ENCODE measurements at regions of chr3 and their contacts with region 1.

Region 1: DNA sequence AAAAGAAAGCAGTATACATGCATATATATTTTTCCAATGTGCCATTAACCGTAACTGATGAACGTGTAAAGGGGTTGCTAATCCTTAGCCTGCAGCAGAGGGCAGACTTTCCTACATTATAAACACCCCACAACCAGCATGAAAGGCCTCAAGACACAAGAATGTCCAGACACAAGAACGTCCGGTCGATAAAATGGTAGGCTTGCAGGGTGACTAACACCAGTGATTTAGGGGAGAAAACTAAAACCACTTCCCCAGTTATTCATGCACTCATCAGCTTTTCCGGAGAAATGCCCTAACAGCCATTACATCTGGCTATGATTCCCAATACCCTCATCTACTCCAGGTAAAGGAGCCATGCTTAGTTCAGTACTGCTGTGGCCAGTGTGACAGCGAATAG is 57.4 kb downstream of the LRTM1 start:
- DNase-seq: no peak
- ATAC-seq: peak in 3 of 4 donors; percentile 80 to 91 (median 83)
- H3K4me3 ChIP-seq: no peak overlapping the region
- H3K27ac ChIP-seq: no peak overlapping the region
- H3K4me1 ChIP-seq: no peaks in the 10 kb centered on the region
- H3K27me3 ChIP-seq: no peaks in the 10 kb centered on the region
- CTCF ChIP-seq: peak in 10 of 12 donors; percentile 21 to 58 (median 52)
- POLR2A ChIP-seq: no peak

Region 2: GRCh38 chr3:54427941-54428871 is 442.2 kb before region 1 on chr3:
- intact Hi-C with region 1: loop called in 1 of 10 experiments (anchors 10 kb)
- DNase-seq: peak in 4 of 5 donors; percentile 32 to 44 (median 39)
- ATAC-seq: peak in 1 of 4 donors; percentile 52
- H3K4me3 ChIP-seq: peak overlapping the region in 1 of 12 donors; percentile 17
- H3K27ac ChIP-seq: no peak overlapping the region
- H3K4me1 ChIP-seq: peaks cover 0 to 6% (median 0%) of the 10 kb centered on the region in 12 donors
- H3K27me3 ChIP-seq: peaks cover 0 to 2% (median 0%) of the 10 kb centered on the region in 9 donors
- CTCF ChIP-seq: peak; percentile 68 to 89 (median 76)
- POLR2A ChIP-seq: no peak

Measured in heart left ventricle (tissue), 16 donors.